ENCODE measurements at regions of chr11 and their contacts with region 1.

Region 1: GRCh38 chr11:1739576-1739975 is 10.8 kb downstream of the IFITM10 start:
- DNase-seq: peak in 1 of 2 donors; percentile 16
- ATAC-seq: no peak
- H3K4me3 ChIP-seq: no peak overlapping the region
- H3K27ac ChIP-seq: no peak overlapping the region
- H3K4me1 ChIP-seq: peaks cover 1% of the 10 kb centered on the region
- H3K27me3 ChIP-seq: peaks cover 0 to 38% (median 11%) of the 10 kb centered on the region in 3 donors
- CTCF ChIP-seq: no peak

Region 2: DNA sequence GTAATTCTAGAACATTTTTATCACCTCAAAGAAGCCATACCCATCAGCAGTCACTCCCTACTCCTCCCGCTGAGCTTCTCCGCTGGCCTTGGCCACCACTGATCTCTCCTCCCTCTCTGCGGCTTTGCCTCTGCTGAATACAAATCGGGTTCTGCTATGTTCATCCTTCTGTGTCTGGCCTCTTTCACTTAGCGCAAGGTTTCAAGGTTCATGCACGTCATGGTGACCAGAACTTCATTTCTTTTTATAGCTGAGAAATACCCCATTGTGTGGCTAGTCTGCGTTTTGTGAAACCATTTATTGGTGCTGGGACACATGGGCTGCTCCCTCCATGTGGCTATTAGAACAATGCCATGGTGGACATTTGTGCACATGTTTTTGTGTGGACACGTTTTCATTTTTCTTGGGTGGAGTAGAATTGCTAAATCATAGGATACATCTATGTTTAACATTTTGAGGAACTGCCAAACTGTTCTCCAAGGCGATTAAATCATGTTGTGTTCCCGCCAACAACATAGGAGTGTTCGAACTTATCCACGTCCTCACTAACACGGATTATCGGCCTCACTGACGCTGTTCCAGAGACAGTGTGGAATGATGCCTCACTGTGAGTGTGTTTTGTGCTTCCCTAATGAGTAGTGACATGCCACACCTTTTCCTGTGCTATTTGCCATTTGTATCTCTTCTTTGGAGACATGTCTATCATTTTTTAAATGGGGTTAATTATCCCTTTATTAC is 66.8 kb before region 1 on chr11:
- intact Hi-C with region 1: loop called in 1 of 2 experiments (anchors 2 kb)
- DNase-seq: no peak
- ATAC-seq: no peak
- H3K4me3 ChIP-seq: no peak overlapping the region
- H3K27ac ChIP-seq: no peak overlapping the region
- H3K4me1 ChIP-seq: no peaks in the 10 kb centered on the region
- H3K27me3 ChIP-seq: peaks cover 0 to 71% (median 11%) of the 10 kb centered on the region in 3 donors
- CTCF ChIP-seq: no peak